CD4-positive, alpha-beta memory T cell (primary cell): ENCODE measurements at regions of chrX and their contacts with region 1.

Region 1: GRCh38 chrX:104136241-104137019 is 20.4 kb downstream of the SLC25A53 start:
- DNase-seq: peak; percentile 56 to 64 (median 61)
- H3K4me3 ChIP-seq: no peak overlapping the region
- H3K4me3 Mint-ChIP-seq: peak overlapping the region in 1 of 8 donors; percentile 12
- H3K27ac ChIP-seq: no peak overlapping the region
- H3K27ac Mint-ChIP-seq: peak overlapping the region in 1 of 7 donors; percentile 21
- H3K4me1 ChIP-seq: peaks cover 6% of the 10 kb centered on the region
- H3K4me1 Mint-ChIP-seq: peaks cover 15 to 26% (median 21%) of the 10 kb centered on the region in 4 donors
- H3K27me3 ChIP-seq: no peaks in the 10 kb centered on the region
- H3K27me3 Mint-ChIP-seq: no peaks in the 10 kb centered on the region

Region 2: DNA sequence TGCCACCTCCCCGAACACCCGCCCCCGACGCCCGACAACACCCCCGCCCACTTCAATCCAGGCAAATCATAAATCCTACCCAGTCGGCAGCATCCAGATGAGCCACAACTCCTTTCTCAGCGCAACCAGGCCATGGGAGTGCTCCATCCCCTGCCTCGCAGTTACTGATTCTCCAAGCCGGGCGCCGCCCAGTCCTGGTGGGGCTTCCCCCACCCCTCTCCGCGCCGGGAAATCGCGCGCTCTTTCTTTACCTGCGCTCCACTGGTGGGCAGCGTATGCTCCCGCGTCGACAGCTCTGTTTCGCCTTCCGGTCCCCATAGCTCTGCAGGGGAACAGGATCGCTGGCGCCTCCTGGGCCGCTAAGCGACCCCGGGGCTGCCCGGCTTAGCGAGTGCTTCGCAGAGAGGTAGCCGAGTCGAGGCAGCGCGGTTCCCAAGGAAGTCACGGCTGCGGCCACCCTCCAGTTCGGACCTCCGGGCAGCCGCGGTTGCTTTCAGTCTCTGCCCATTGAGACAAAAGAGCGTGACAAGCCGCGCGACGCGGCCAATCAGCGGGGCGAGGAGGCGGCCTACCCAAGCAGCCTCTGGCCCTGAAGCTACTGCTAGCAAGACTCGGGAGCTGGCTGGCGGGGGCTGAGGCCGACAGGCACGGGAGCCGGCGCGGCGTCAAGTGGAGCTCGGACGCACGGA is 217.7 kb before region 1 on chrX:
- CTCF ChIA-PET with region 1: no interaction called
- POLR2A ChIA-PET with region 1: no interaction called
- intact Hi-C with region 1: loop called (anchors 1 kb)
- DNase-seq: peak; percentile 55 to 73 (median 62)
- H3K4me3 ChIP-seq: peak overlapping the region; percentile 36 to 70
- H3K4me3 Mint-ChIP-seq: peak overlapping the region; percentile 88 to 97 (median 94)
- H3K27ac ChIP-seq: peak overlapping the region; percentile 74
- H3K27ac Mint-ChIP-seq: peak overlapping the region; percentile 86 to 96 (median 91)
- H3K4me1 ChIP-seq: peaks cover 27% of the 10 kb centered on the region
- H3K4me1 Mint-ChIP-seq: peaks cover 21 to 35% (median 30%) of the 10 kb centered on the region in 4 donors
- H3K27me3 ChIP-seq: no peaks in the 10 kb centered on the region
- H3K27me3 Mint-ChIP-seq: no peaks in the 10 kb centered on the region

Region 3: DNA sequence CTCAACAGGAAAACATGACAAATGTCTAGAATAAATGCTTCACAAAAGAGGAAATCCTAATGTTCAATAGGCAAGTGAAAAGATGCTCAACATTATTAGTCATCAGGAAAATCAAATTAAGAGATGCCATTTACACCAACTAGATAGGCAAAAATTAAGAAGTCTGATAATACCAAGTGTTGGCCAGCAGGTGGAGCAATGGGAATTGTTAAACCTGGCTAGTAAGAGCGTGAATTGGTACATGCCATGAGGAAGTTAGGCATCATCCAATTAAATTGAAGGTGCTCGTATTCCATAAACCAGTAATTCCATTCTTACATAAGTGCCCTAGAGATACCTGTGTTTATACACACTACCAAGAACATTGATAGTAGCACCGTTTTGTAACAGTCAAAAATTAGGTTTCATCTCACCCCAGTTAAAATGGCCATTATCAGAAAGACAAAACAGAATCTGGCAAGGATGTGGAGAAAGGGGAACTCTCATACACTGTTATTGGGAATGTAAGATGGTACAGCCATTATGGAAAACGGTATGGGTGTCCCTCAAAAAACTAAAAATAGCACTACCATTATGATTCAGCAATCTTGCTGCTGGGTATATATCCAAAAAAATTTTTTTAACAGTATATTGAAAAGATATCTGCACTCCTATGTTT is 38.1 kb before region 1 on chrX:
- CTCF ChIA-PET with region 1: interaction called, 43 read pairs
- POLR2A ChIA-PET with region 1: interaction called, 3 read pairs
- intact Hi-C with region 1: loop called (anchors 1 kb)
- DNase-seq: peak; percentile 54 to 62 (median 60)
- H3K4me3 ChIP-seq: no peak overlapping the region
- H3K4me3 Mint-ChIP-seq: no peak overlapping the region
- H3K27ac ChIP-seq: no peak overlapping the region
- H3K27ac Mint-ChIP-seq: no peak overlapping the region
- H3K4me1 ChIP-seq: peaks cover 3% of the 10 kb centered on the region
- H3K4me1 Mint-ChIP-seq: peaks cover 0 to 3% (median 2%) of the 10 kb centered on the region in 4 donors
- H3K27me3 ChIP-seq: no peaks in the 10 kb centered on the region
- H3K27me3 Mint-ChIP-seq: peaks cover 0 to 4% of the 10 kb centered on the region in 2 donors

Region 4: GRCh38 chrX:104113222-104113965 is 23.0 kb before region 1 on chrX:
- CTCF ChIA-PET with region 1: interaction called, 13 read pairs
- POLR2A ChIA-PET with region 1: interaction called, 5 read pairs
- intact Hi-C with region 1: loop called (anchors 2 kb)
- DNase-seq: peak; percentile 38 to 61 (median 49)
- H3K4me3 ChIP-seq: peak overlapping the region; percentile 57 to 66
- H3K4me3 Mint-ChIP-seq: peak overlapping the region; percentile 87 to 95 (median 91)
- H3K27ac ChIP-seq: peak overlapping the region; percentile 64
- H3K27ac Mint-ChIP-seq: peak overlapping the region; percentile 78 to 92 (median 88)
- H3K4me1 ChIP-seq: peaks cover 39% of the 10 kb centered on the region
- H3K4me1 Mint-ChIP-seq: peaks cover 19 to 43% (median 29%) of the 10 kb centered on the region in 4 donors
- H3K27me3 ChIP-seq: no peaks in the 10 kb centered on the region
- H3K27me3 Mint-ChIP-seq: no peaks in the 10 kb centered on the region

Region 5: DNA sequence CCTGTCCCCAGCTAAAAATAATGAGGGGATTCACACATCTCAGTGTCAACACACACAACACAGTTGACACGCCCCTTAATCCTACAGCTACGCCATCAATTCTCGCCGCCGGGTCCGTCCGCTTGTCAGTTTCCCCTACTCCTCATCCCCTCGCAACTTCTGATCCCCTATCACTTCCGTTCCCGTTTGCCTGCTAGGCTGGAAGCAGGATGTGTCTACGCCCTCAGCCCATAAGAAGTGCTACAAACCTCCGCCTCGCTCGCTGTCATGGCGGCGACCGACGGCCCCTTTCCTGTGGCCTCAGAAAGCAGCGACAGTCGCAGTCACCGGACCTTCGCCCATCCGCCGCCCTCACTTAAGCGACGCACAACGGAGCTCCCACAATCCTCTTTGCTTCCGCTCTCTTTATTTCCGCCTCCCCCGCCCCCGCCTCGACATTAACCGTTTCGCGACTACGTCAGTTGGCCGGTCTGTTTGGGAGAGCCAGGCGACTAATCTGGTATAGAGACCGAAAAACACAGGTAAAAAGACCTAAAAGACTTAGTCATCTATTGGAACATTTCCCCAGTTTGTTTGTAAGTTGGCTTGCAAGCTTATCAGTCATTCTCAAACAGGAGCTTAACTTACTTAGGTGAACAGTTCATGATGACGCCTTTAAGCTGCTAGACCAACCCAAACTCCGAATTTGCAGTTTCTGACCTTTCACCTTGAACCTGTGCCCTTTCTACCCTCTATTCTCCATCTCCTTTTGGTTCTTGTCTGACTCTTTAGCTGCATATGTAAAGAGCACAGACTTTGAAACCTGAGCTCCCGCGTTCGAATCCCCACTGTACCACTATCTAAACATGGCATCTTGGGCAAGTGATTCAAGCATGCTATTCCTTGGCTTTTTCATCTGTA is 20.4 kb after region 1 on chrX and contains the start of gene SLC25A53:
- CTCF ChIA-PET with region 1: interaction called, 11 read pairs
- POLR2A ChIA-PET with region 1: interaction called, 3 read pairs
- intact Hi-C with region 1: no loop called
- DNase-seq: peak; percentile 77 to 89 (median 81)
- H3K4me3 ChIP-seq: peak within 1 kb of the TSS; percentile 71 to 78
- H3K4me3 Mint-ChIP-seq: peak within 1 kb of the TSS; percentile 93 to 100 (median 96)
- H3K27ac ChIP-seq: peak within 1 kb of the TSS; percentile 73
- H3K27ac Mint-ChIP-seq: peak within 1 kb of the TSS; percentile 96 to 100 (median 99)
- H3K4me1 ChIP-seq: peaks cover 19% of the 10 kb centered on the region
- H3K4me1 Mint-ChIP-seq: peaks cover 4 to 33% (median 6%) of the 10 kb centered on the region in 4 donors
- H3K27me3 ChIP-seq: no peaks in the 10 kb centered on the region
- H3K27me3 Mint-ChIP-seq: no peaks in the 10 kb centered on the region
- total RNA-seq, gene SLC25A53: 20.9 to 21.0 TPM

Region 6: GRCh38 chrX:104282166-104282935 is 145.9 kb after region 1 on chrX:
- CTCF ChIA-PET with region 1: no interaction called
- POLR2A ChIA-PET with region 1: no interaction called
- intact Hi-C with region 1: no loop called
- DNase-seq: no peak
- H3K4me3 ChIP-seq: no peak overlapping the region
- H3K4me3 Mint-ChIP-seq: no peak overlapping the region
- H3K27ac ChIP-seq: no peak overlapping the region
- H3K27ac Mint-ChIP-seq: no peak overlapping the region
- H3K4me1 ChIP-seq: no peaks in the 10 kb centered on the region
- H3K4me1 Mint-ChIP-seq: no peaks in the 10 kb centered on the region
- H3K27me3 ChIP-seq: no peaks in the 10 kb centered on the region
- H3K27me3 Mint-ChIP-seq: peaks cover 2 to 6% of the 10 kb centered on the region in 2 donors